Activated T-helper 1 cell treated with anti-CD3 and anti-CD28 coated beads, Interleukin-12 subunit alpha, Interleukin-12 subunit beta, Interleukin-2, Interleukin-4 antibody, amounts not matched to agents 30 ng/mL and 10 ng/mL and 1 ng/mL, durations not matched to agents 14 hours and 24 hours and 36 hours (primary cell): ENCODE measurements at regions of chr5 and their contacts with region 1.

Region 1: DNA sequence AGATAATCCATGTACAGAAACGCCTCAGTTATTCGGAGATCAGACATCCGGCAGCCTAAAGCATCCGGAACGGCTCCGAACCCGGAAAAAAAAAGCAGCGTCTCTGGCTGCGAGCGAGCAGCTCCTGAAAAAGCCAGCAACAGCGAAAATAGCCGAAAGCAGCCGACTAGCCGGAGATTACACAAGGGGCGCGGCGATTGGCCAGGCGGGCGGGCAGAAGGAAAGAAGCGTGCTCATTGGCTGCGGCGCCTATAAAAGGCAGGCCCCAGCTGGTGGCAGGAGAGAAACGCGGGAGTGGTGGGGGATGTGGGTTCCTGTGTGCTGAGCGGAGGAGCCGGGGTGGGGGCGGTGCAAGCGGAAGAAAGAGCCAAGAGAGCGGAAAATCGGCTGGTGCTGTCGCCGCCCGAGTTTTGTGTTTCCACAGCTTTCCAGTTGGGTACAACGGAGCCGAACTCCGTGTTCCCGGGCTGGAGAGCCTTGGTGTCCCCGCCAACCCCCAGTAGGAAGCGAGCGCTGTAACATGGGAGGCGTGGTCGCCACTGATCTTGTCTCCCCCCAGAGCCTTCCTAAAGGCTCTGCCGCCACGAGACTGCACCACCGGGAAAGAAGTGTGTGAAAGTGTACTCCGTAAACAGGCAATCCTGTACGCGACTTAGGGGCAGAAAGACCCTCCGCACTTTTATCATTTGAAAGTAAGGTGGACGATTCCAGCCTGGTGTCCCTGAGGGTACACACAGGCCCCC is at the start of gene ARL15:
- DNase-seq: peak; percentile 97
- H3K4me3 Mint-ChIP-seq: peak within 1 kb of the TSS; percentile 91
- H3K27ac Mint-ChIP-seq: peak within 1 kb of the TSS; percentile 90
- H3K4me1 Mint-ChIP-seq: peaks cover 26% of the 10 kb centered on the region
- H3K27me3 Mint-ChIP-seq: peaks cover 21% of the 10 kb centered on the region
- total RNA-seq, gene ARL15: 7.6 and 10.4 TPM in 2 replicates

Region 2: GRCh38 chr5:53069626-53070025 is 1241.0 kb before region 1 on chr5:
- intact Hi-C with region 1: loop called (anchors 1 kb)
- DNase-seq: peak; percentile 71
- H3K4me3 Mint-ChIP-seq: peak overlapping the region; percentile 41
- H3K27ac Mint-ChIP-seq: peak overlapping the region; percentile 82
- H3K4me1 Mint-ChIP-seq: peaks cover 41% of the 10 kb centered on the region
- H3K27me3 Mint-ChIP-seq: no peaks in the 10 kb centered on the region

Region 3: DNA sequence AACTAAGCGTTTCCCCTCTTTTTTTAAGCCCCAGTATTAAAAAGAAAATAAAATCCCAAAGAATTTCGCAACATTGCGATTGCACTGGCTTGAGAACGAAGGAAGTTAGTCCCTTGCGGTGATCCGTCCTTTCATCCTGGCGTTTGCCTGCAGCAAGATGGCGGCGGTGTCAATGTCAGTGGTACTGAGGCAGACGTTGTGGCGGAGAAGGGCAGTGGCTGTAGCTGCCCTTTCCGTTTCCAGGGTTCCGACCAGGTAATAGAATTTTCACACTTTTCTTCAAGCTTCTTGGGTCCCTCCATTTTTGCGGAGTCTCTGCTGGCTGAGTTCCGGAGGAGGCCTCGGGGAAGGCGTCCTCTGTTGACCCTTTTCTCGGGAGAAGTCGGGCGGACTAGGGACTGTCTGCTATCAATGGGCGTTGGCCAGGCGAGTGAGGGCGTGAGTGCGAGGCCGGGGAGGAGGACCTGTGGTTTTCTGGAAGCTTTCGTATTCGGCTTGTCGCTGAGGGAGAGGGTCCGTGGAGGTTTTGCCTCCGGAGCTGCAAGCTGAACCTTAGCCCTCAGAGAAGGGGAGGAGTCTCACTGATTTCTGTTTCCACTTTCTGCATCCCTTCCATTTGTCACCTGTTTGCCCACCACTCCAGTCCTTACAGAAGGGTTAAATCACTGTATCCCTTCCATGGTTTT is 750.0 kb before region 1 on chr5 and contains the start of gene NDUFS4:
- intact Hi-C with region 1: loop called (anchors 5 kb)
- DNase-seq: peak; percentile 69
- H3K4me3 Mint-ChIP-seq: peak within 1 kb of the TSS; percentile 95
- H3K27ac Mint-ChIP-seq: peak within 1 kb of the TSS; percentile 91
- H3K4me1 Mint-ChIP-seq: peaks cover 17% of the 10 kb centered on the region
- H3K27me3 Mint-ChIP-seq: peaks cover 17% of the 10 kb centered on the region
- total RNA-seq, gene NDUFS4: 45.8 and 50.4 TPM in 2 replicates

Region 4: DNA sequence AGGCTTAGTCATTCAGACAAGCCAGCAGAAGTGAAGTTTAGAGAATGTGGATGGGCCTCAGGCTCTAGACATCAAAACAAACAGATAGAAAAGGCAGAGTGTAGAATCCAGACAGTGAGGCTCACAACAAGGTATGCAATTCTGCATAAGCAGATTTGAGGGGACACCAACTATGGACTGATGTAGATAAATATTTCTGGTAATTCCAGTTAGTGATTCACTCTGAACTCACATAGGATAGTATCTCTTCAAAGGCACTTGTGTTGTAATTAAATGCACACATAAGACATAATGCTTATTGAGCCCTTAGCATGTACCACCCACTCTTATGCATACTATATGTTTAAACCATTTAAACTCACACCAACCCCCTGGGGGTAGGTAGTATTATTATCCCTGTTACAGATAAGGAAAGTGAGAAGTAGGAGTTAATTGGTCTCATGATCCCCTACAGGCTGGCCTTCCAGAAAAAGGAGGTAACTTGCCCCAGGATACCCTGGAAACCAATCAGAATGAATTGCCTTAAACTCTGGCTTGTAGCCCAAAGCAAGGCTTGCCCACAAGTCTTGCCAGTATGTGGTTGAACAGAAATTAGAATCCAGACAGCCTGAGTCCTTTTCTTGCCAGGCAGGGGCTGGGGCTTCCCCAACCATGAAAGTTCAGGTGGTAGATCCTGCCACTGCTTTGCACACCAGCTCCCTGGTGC is 105.4 kb after region 1 on chr5:
- intact Hi-C with region 1: loop called (anchors 1 kb)
- DNase-seq: no peak
- H3K4me3 Mint-ChIP-seq: no peak overlapping the region
- H3K27ac Mint-ChIP-seq: no peak overlapping the region
- H3K4me1 Mint-ChIP-seq: no peaks in the 10 kb centered on the region
- H3K27me3 Mint-ChIP-seq: peaks cover 25% of the 10 kb centered on the region

Region 5: DNA sequence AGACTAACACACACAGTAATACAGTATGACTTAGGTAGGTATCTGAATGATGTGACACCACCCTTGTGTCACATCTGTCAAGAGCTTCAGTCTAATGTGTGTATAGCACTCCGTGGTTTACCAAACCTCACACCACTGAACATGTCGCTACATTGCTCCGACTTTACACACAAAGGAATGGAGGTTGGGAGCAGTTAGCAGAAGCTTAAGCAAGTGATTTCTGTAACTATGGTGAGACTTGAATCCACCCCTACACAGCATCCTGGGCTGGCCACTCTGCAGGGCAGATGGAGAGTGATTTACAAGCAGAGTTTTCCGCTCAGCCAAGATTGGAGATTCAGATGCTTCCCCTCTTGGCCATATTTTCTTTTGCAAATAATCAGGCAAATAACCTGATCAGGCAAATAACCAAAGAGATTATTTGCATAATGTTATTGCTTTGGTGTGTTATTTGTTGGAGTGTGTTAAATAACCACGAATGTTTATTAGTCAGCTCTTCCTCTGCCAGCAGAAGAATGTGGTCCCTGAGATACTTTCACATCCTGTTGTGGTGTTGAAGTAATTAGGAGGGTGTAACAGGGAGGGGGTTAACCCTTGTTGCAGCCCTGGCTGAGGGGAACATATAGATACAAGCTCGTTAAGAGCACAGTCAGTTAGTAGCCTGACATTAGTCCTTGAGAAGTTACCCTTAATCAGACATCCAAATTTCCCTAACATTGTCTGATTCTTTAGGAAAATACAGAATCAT is 299.8 kb after region 1 on chr5:
- intact Hi-C with region 1: loop called (anchors 1 kb)
- DNase-seq: peak; percentile 41
- H3K4me3 Mint-ChIP-seq: peak overlapping the region; percentile 68
- H3K27ac Mint-ChIP-seq: peak overlapping the region; percentile 92
- H3K4me1 Mint-ChIP-seq: peaks cover 27% of the 10 kb centered on the region
- H3K27me3 Mint-ChIP-seq: peaks cover 3% of the 10 kb centered on the region

Region 6: DNA sequence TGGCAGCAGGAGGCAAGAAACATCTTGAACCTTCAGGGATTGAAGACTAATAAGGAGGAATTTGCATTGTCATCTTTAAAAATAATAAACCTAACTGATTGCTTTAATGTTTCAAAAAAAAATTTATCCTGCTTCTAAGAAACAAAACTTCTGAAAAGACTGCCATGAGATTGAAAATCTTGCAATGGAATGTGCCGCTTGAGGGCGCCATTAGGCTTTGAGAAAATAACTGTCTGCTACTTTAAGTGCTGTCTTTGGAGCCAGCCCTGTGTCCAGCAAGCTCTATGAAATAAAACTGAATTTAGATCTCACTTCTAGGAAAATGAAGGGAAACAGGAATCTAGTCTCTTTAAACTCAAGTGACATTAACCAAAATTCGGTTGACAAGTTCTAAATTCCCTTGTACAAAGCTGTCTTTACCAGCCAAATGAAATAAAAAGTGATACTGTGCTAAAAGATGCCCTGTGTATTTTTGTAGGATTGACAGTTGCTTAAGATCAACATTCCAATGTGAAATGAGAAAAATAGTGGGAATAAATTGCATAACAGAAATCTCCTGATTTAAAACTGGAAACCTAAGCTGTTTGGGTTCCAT is 595.4 kb after region 1 on chr5:
- intact Hi-C with region 1: loop called (anchors 10 kb)
- DNase-seq: peak; percentile 50
- H3K4me3 Mint-ChIP-seq: no peak overlapping the region
- H3K27ac Mint-ChIP-seq: no peak overlapping the region
- H3K4me1 Mint-ChIP-seq: peaks cover 55% of the 10 kb centered on the region
- H3K27me3 Mint-ChIP-seq: peaks cover 37% of the 10 kb centered on the region